ENCODE measurements at regions of chr10 and their contacts with region 1.

Region 1: GRCh38 chr10:117174439-117175214 is 22.7 kb upstream of the KCNK18 start:
- DNase-seq: peak; percentile 78 to 82 (median 81)
- H3K4me3 ChIP-seq: peak overlapping the region; percentile 49 to 61
- H3K4me3 Mint-ChIP-seq: peak overlapping the region; percentile 89 to 98 (median 94)
- H3K27ac ChIP-seq: no peak overlapping the region
- H3K27ac Mint-ChIP-seq: peak overlapping the region in 6 of 7 donors; percentile 31 to 85 (median 65)
- H3K4me1 ChIP-seq: peaks cover 7% of the 10 kb centered on the region
- H3K4me1 Mint-ChIP-seq: peaks cover 9 to 22% (median 14%) of the 10 kb centered on the region in 4 donors
- H3K27me3 ChIP-seq: peaks cover 14% of the 10 kb centered on the region
- H3K27me3 Mint-ChIP-seq: peaks cover 29 to 33% of the 10 kb centered on the region in 2 donors

Region 2: GRCh38 chr10:116787893-116788665 is 386.5 kb before region 1 on chr10:
- CTCF ChIA-PET with region 1: interaction called, 196 read pairs
- POLR2A ChIA-PET with region 1: no interaction called
- intact Hi-C with region 1: loop called (anchors 2 kb)
- DNase-seq: peak; percentile 72 to 81 (median 77)
- H3K4me3 ChIP-seq: peak overlapping the region in 1 of 2 donors; percentile 19
- H3K4me3 Mint-ChIP-seq: peak overlapping the region in 7 of 8 donors; percentile 53 to 79 (median 78)
- H3K27ac ChIP-seq: no peak overlapping the region
- H3K27ac Mint-ChIP-seq: peak overlapping the region; percentile 38 to 89 (median 80)
- H3K4me1 ChIP-seq: peaks cover 11% of the 10 kb centered on the region
- H3K4me1 Mint-ChIP-seq: peaks cover 4 to 18% (median 12%) of the 10 kb centered on the region in 4 donors
- H3K27me3 ChIP-seq: no peaks in the 10 kb centered on the region
- H3K27me3 Mint-ChIP-seq: peaks cover 10 to 18% of the 10 kb centered on the region in 2 donors

Region 3: GRCh38 chr10:116992183-116992582 is 182.4 kb before region 1 on chr10:
- CTCF ChIA-PET with region 1: no interaction called
- POLR2A ChIA-PET with region 1: no interaction called
- intact Hi-C with region 1: loop called (anchors 1 kb)
- DNase-seq: no peak
- H3K4me3 ChIP-seq: no peak overlapping the region
- H3K4me3 Mint-ChIP-seq: no peak overlapping the region
- H3K27ac ChIP-seq: no peak overlapping the region
- H3K27ac Mint-ChIP-seq: no peak overlapping the region
- H3K4me1 ChIP-seq: no peaks in the 10 kb centered on the region
- H3K4me1 Mint-ChIP-seq: no peaks in the 10 kb centered on the region
- H3K27me3 ChIP-seq: no peaks in the 10 kb centered on the region
- H3K27me3 Mint-ChIP-seq: peaks cover 2 to 4% of the 10 kb centered on the region in 2 donors

Region 4: DNA sequence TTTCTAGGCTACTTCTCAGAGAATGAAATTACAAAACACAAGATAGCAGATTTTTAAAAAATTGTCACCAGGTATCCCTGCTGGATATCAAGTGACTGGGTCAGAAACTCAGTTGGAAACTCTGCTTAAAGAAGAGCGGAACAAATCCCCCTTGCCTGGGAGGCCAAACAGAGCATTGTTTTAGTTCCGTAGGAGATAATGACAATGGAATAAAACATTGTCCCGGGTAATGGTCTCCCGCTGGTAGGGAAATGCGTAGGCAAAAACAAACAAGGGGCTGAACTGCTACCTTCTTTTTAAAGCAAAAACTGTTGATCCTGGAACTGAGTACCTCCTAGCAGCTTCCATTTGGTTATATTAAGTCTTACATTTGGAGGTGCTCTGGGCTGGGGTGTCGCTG is 15.2 kb before region 1 on chr10:
- CTCF ChIA-PET with region 1: interaction called, 55 read pairs
- POLR2A ChIA-PET with region 1: no interaction called
- intact Hi-C with region 1: no loop called
- DNase-seq: no peak
- H3K4me3 ChIP-seq: no peak overlapping the region
- H3K4me3 Mint-ChIP-seq: no peak overlapping the region
- H3K27ac ChIP-seq: no peak overlapping the region
- H3K27ac Mint-ChIP-seq: no peak overlapping the region
- H3K4me1 ChIP-seq: peaks cover 14% of the 10 kb centered on the region
- H3K4me1 Mint-ChIP-seq: peaks cover 9 to 26% (median 14%) of the 10 kb centered on the region in 4 donors
- H3K27me3 ChIP-seq: peaks cover 35% of the 10 kb centered on the region
- H3K27me3 Mint-ChIP-seq: peaks cover 63 to 70% of the 10 kb centered on the region in 2 donors

Region 5: GRCh38 chr10:117204316-117204715 is 29.7 kb after region 1 on chr10:
- CTCF ChIA-PET with region 1: interaction called, 11 read pairs
- POLR2A ChIA-PET with region 1: no interaction called
- intact Hi-C with region 1: no loop called
- DNase-seq: no peak
- H3K4me3 ChIP-seq: no peak overlapping the region
- H3K4me3 Mint-ChIP-seq: no peak overlapping the region
- H3K27ac ChIP-seq: no peak overlapping the region
- H3K27ac Mint-ChIP-seq: no peak overlapping the region
- H3K4me1 ChIP-seq: no peaks in the 10 kb centered on the region
- H3K4me1 Mint-ChIP-seq: no peaks in the 10 kb centered on the region
- H3K27me3 ChIP-seq: no peaks in the 10 kb centered on the region
- H3K27me3 Mint-ChIP-seq: peaks cover 8 to 13% of the 10 kb centered on the region in 2 donors